Mammary epithelial cell (primary cell): ENCODE measurements at regions of chr15 and their contacts with region 1.

Region 1: GRCh38 chr15:52018693-52019387 is at the start of gene MAPK6:
- DNase-seq: peak; percentile 91
- H3K4me3 ChIP-seq: peak within 1 kb of the TSS; percentile 57 to 80 (median 76)
- H3K27ac ChIP-seq: peak within 1 kb of the TSS; percentile 99
- H3K4me1 ChIP-seq: peaks cover 16% of the 10 kb centered on the region
- H3K27me3 ChIP-seq: no peaks in the 10 kb centered on the region
- CTCF ChIP-seq: no peak
- total RNA-seq, gene MAPK6: 99.9 to 105 TPM

Region 2: GRCh38 chr15:51622604-51623370 is 396.1 kb before region 1 on chr15 and contains the start of gene DMXL2:
- CTCF ChIA-PET with region 1: no interaction called
- dilution Hi-C with region 1: no loop called
- in situ Hi-C with region 1: no loop called
- intact Hi-C with region 1: no loop called
- DNase-seq: peak; percentile 78
- H3K4me3 ChIP-seq: peak within 1 kb of the TSS; percentile 70 to 97 (median 88)
- H3K27ac ChIP-seq: peak within 1 kb of the TSS; percentile 45
- H3K4me1 ChIP-seq: peaks cover 9% of the 10 kb centered on the region
- H3K27me3 ChIP-seq: no peaks in the 10 kb centered on the region
- CTCF ChIP-seq: no peak
- total RNA-seq, gene DMXL2: 18.2 to 20.7 TPM

Region 3: GRCh38 chr15:51982013-51982769 is 36.6 kb before region 1 on chr15:
- CTCF ChIA-PET with region 1: no interaction called
- dilution Hi-C with region 1: loop called (anchors 5 kb)
- in situ Hi-C with region 1: no loop called
- intact Hi-C with region 1: loop called (anchors 1 kb)
- DNase-seq: peak; percentile 76
- H3K4me3 ChIP-seq: peak overlapping the region; percentile 20 to 25 (median 23)
- H3K27ac ChIP-seq: peak overlapping the region; percentile 75
- H3K4me1 ChIP-seq: peaks cover 8% of the 10 kb centered on the region
- H3K27me3 ChIP-seq: no peaks in the 10 kb centered on the region
- CTCF ChIP-seq: peak; percentile 63 to 72

Region 4: DNA sequence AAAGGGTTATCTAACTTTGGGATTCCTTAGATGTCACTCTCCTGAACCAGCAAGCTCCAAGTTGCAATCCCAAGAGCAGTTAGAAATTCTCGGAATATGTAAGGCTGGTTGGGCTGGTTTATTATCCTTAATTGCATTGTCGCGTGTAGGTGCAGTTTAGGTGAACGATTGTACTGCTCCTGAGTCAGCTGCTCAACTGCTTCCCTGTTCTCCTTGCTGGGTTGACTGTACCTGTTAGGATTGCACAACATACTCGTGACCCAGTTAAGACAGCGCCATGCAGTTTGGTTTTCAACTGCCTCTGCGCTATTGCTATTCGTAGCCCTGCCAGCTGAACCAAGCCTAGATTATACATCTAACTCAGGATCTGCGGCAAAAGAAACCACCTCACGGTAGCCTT is 52.7 kb after region 1 on chr15:
- CTCF ChIA-PET with region 1: no interaction called
- dilution Hi-C with region 1: loop called (anchors 5 kb)
- in situ Hi-C with region 1: no loop called
- intact Hi-C with region 1: no loop called
- DNase-seq: peak; percentile 61
- H3K4me3 ChIP-seq: no peak overlapping the region
- H3K27ac ChIP-seq: no peak overlapping the region
- H3K4me1 ChIP-seq: peaks cover 58% of the 10 kb centered on the region
- H3K27me3 ChIP-seq: no peaks in the 10 kb centered on the region
- CTCF ChIP-seq: no peak

Region 5: DNA sequence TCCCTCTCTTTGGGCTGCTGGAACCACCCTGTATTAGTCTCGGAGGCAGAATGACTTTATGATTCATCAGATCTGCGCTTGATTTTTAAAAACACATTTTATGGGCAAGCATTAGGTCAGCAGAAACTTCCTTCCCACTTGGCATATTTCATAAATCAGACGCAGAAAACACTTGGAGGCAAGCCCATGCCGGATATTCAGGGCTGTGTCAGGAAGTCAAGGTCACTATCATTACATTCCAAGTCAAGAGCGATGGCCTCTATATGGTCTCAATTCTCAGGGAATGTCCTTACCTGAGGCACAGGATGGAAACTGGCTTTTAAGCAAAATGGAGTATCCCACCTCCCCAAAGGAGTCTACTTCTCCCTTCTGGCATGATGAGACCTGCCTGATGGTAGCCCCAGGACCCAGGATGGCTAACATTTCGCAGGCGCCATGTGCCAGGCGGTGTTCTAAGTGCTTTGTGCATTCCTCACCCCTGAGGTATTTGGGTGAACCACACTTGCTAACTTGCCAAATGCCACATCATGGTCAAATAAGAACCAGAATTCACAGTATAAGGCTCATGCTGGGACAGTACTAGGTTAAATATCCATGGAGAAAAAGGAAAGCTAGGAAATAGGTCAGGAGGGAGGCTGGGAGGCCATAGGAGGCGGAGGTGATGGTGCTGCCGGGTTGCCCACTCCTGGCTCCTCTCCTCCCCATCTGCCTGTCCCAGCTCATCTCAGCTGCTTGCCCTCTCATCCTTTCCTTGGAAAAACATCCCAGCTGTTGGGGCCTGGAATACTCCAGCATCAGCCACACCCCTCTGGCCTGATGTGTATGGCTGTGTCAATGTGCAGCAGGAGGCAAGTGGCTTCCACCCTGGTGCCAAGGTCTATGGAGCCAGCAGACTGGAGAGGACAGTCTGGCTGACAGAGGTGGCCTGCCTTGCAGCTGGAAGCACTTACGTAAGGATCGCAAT is 75.0 kb after region 1 on chr15:
- CTCF ChIA-PET with region 1: no interaction called
- dilution Hi-C with region 1: no loop called
- in situ Hi-C with region 1: no loop called
- intact Hi-C with region 1: loop called (anchors 2 kb)
- DNase-seq: peak; percentile 98
- H3K4me3 ChIP-seq: no peak overlapping the region
- H3K27ac ChIP-seq: peak overlapping the region; percentile 93
- H3K4me1 ChIP-seq: peaks cover 32% of the 10 kb centered on the region
- H3K27me3 ChIP-seq: no peaks in the 10 kb centered on the region
- CTCF ChIP-seq: no peak

Region 6: DNA sequence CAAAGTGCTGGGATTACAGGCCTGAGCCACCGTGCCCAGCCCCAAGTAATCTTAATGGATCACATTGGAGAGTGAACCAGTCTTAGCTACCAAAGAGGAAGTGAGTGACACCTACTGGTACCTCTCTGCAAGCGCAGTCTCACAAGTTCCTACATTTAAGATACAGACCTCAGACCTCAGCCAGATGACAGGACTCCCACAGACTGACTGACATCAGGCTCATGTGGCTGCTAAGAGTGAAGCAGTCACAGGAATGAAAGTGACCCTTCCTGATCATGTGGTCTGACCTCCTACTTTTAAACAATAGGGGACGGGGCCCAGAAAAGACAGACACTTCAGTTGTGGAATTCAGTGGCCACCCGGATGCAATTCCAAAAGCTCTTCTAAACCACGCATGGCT is 208.6 kb after region 1 on chr15:
- CTCF ChIA-PET with region 1: interaction called, 16 read pairs
- dilution Hi-C with region 1: no loop called
- in situ Hi-C with region 1: no loop called
- intact Hi-C with region 1: no loop called
- DNase-seq: peak; percentile 71
- H3K4me3 ChIP-seq: no peak overlapping the region
- H3K27ac ChIP-seq: no peak overlapping the region
- H3K4me1 ChIP-seq: peaks cover 3% of the 10 kb centered on the region
- H3K27me3 ChIP-seq: no peaks in the 10 kb centered on the region
- CTCF ChIP-seq: peak; percentile 78 to 87